ENCODE measurements at regions of chr6 and their contacts with region 1.

Region 1: GRCh38 chr6:15621203-15622044 is 41.4 kb downstream of the DTNBP1 start:
- DNase-seq: peak; percentile 21
- H3K4me3 Mint-ChIP-seq: no peak overlapping the region
- H3K27ac Mint-ChIP-seq: peak overlapping the region; percentile 85
- H3K4me1 Mint-ChIP-seq: peaks cover 12% of the 10 kb centered on the region
- H3K27me3 Mint-ChIP-seq: no peaks in the 10 kb centered on the region
- CTCF ChIP-seq: no peak

Region 2: DNA sequence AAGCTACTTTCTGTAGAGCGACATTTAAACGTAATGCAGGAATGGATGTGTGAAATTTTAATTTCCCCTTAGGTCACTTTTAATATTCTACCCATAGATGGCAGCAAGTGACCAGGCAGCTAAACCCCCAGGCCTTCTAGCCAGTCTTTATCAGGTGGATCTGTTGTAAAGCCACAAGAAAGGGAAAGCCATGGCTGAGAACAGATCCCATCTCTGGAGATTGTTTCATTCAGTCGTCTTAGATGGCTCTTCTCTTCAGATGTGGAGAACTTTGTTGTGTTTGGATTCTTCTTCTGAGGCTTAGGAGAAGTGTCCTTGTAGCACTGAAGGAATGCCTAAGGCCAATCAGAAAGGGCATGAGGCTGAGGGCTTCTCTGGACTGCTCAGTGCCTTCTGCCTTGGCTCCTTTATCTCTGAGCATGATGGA is 1712.5 kb before region 1 on chr6:
- CTCF ChIA-PET with region 1: interaction called, 5 read pairs
- POLR2A ChIA-PET with region 1: no interaction called
- intact Hi-C with region 1: loop called (anchors 2 kb)
- DNase-seq: peak; percentile 74
- H3K4me3 Mint-ChIP-seq: no peak overlapping the region
- H3K27ac Mint-ChIP-seq: no peak overlapping the region
- H3K4me1 Mint-ChIP-seq: peaks cover 8% of the 10 kb centered on the region
- H3K27me3 Mint-ChIP-seq: peaks cover 28% of the 10 kb centered on the region
- CTCF ChIP-seq: peak; percentile 74

Region 3: DNA sequence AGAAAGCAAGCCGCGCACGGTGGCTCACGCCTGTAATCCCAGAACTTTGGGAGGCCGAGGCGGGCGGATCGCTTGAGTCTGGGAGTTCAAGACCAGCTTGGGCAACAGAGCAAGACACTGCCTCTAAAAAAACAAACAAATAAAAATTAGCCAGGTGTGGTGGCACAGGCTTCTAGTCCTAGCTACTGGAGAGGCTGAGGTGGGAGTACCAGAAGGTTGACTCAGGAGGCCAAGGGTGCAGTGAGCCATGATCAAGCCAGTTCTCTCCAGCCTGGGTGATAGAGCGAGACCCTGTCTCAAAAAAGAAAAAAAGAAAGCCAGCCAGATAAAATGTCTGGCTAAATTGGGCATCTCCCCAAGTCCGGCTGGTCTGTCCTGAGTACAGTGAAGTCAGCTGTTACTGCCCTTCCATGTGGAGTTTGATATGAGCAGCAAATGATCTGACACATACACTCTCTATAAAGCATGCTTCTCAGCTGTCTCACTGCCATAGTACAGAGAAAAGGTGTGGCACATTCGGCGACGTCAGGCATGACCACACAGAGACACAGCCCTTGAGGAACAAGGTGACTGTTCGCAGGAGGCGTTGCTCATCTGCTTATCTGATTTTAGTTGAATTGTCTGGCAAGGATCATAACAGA is 1490.9 kb before region 1 on chr6:
- CTCF ChIA-PET with region 1: interaction called, 3 read pairs
- POLR2A ChIA-PET with region 1: interaction called, 5 read pairs
- intact Hi-C with region 1: loop called (anchors 5 kb)
- DNase-seq: peak; percentile 20
- H3K4me3 Mint-ChIP-seq: no peak overlapping the region
- H3K27ac Mint-ChIP-seq: no peak overlapping the region
- H3K4me1 Mint-ChIP-seq: no peaks in the 10 kb centered on the region
- H3K27me3 Mint-ChIP-seq: no peaks in the 10 kb centered on the region
- CTCF ChIP-seq: no peak

Region 4: GRCh38 chr6:15464211-15464725 is 157.2 kb before region 1 on chr6:
- CTCF ChIA-PET with region 1: no interaction called
- POLR2A ChIA-PET with region 1: no interaction called
- intact Hi-C with region 1: no loop called
- DNase-seq: peak; percentile 57
- H3K4me3 Mint-ChIP-seq: no peak overlapping the region
- H3K27ac Mint-ChIP-seq: no peak overlapping the region
- H3K4me1 Mint-ChIP-seq: no peaks in the 10 kb centered on the region
- H3K27me3 Mint-ChIP-seq: no peaks in the 10 kb centered on the region
- CTCF ChIP-seq: peak; percentile 32

Region 5: GRCh38 chr6:15491255-15491985 is 130.0 kb before region 1 on chr6:
- CTCF ChIA-PET with region 1: interaction called, 3 read pairs
- POLR2A ChIA-PET with region 1: no interaction called
- intact Hi-C with region 1: loop called (anchors 5 kb)
- DNase-seq: peak; percentile 68
- H3K4me3 Mint-ChIP-seq: no peak overlapping the region
- H3K27ac Mint-ChIP-seq: no peak overlapping the region
- H3K4me1 Mint-ChIP-seq: peaks cover 12% of the 10 kb centered on the region
- H3K27me3 Mint-ChIP-seq: no peaks in the 10 kb centered on the region
- CTCF ChIP-seq: peak; percentile 80

Region 6: GRCh38 chr6:15608396-15608795 is 13.0 kb before region 1 on chr6:
- CTCF ChIA-PET with region 1: interaction called, 30 read pairs
- POLR2A ChIA-PET with region 1: interaction called, 3 read pairs
- intact Hi-C with region 1: no loop called
- DNase-seq: peak; percentile 80
- H3K4me3 Mint-ChIP-seq: no peak overlapping the region
- H3K27ac Mint-ChIP-seq: peak overlapping the region; percentile 74
- H3K4me1 Mint-ChIP-seq: peaks cover 14% of the 10 kb centered on the region
- H3K27me3 Mint-ChIP-seq: no peaks in the 10 kb centered on the region
- CTCF ChIP-seq: no peak